Caco-2 (cell line): ENCODE measurements at regions of chr20 and their contacts with region 1.

Region 1: GRCh38 chr20:50680412-50680908 is 10.9 kb downstream of the RIPOR3 start:
- DNase-seq: peak; percentile 90 to 93
- H3K4me3 ChIP-seq: no peak overlapping the region
- H3K4me3 Mint-ChIP-seq: peak overlapping the region; percentile 25
- H3K27ac Mint-ChIP-seq: peak overlapping the region; percentile 67
- H3K4me1 ChIP-seq: peaks cover 49% of the 10 kb centered on the region
- H3K4me1 Mint-ChIP-seq: peaks cover 45% of the 10 kb centered on the region
- H3K27me3 ChIP-seq: no peaks in the 10 kb centered on the region
- H3K27me3 Mint-ChIP-seq: no peaks in the 10 kb centered on the region
- CTCF ChIP-seq: no peak

Region 2: DNA sequence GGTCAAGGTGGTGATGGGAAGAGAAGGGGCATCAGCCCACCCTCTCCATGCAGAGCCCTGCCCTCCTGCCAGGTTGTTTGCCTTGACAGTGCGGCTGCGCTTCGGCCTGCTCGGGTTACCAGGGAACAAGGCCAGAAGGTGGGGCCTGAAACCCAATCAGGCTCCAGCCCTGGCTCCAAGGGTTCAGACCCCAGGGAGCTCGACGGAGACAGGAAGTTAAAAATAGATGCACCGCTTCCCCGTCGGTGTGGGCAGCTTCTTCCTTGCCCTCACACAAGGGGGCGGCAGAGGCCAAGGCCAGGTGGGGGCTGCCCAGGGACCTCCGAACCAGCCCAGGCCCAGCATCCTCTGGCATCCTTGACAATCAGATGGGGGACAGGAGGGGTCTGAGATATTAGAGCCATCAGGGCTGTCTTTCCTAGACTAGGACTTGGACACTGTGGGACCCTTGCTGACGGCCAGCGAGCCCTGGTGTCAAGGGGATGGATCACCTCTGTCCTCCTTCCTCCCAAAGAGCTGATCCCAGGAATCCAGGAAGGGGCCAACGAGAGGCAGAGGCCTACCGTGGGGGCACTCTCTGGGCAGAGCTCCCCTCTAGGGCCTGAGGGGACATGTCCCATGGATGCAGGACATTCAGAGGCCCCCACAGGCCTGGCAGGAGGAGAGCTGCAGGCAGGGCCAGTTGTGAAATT is 54.3 kb before region 1 on chr20:
- CTCF ChIA-PET with region 1: interaction called, 10 read pairs
- POLR2A ChIA-PET with region 1: no interaction called
- intact Hi-C with region 1: no loop called
- DNase-seq: peak; percentile 85 to 91
- H3K4me3 ChIP-seq: no peak overlapping the region
- H3K4me3 Mint-ChIP-seq: no peak overlapping the region
- H3K27ac Mint-ChIP-seq: peak overlapping the region; percentile 23
- H3K4me1 ChIP-seq: peaks cover 41% of the 10 kb centered on the region
- H3K4me1 Mint-ChIP-seq: peaks cover 12% of the 10 kb centered on the region
- H3K27me3 ChIP-seq: no peaks in the 10 kb centered on the region
- H3K27me3 Mint-ChIP-seq: no peaks in the 10 kb centered on the region
- CTCF ChIP-seq: peak; percentile 96 to 97

Region 3: DNA sequence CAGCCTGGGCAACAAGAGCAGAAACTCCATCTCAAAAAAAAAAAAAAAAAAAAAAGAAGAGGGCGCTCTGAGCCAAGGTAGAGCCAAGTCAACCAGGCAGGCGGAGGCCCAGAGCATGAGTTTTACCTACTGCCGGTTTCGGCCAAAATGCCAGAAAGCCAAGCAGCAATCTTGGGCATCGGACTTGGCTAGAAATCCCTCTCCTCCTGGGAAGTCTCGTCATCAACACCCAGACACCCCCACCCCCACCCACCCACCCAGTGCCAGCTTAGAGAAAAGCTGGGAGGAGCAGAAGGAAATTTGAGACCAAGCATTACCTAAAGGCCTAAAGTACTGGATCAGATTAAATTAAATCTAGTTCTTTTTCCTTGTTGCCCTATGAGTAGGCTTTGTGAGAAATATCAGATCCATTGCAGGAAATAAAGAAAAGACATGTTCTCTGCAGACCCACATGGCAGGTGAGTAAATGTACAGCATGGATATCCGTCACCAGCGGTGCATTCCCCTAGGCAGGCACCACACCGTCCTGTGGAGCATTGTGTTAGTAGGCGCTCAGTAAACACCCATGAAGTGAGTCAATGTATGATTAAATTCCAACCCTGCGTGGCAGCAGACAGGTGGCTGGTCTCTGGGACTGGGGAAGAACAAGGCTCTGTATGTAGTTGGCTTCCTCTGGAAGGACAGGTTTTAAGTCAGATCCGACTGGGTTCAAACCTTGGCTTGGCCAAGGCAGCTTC is 10.2 kb before region 1 on chr20:
- CTCF ChIA-PET with region 1: interaction called, 4 read pairs
- POLR2A ChIA-PET with region 1: interaction called, 3 read pairs
- intact Hi-C with region 1: loop called (anchors 1 kb)
- DNase-seq: peak; percentile 86 to 89
- H3K4me3 ChIP-seq: no peak overlapping the region
- H3K4me3 Mint-ChIP-seq: no peak overlapping the region
- H3K27ac Mint-ChIP-seq: peak overlapping the region; percentile 71
- H3K4me1 ChIP-seq: peaks cover 82% of the 10 kb centered on the region
- H3K4me1 Mint-ChIP-seq: peaks cover 76% of the 10 kb centered on the region
- H3K27me3 ChIP-seq: no peaks in the 10 kb centered on the region
- H3K27me3 Mint-ChIP-seq: no peaks in the 10 kb centered on the region
- CTCF ChIP-seq: no peak

Region 4: GRCh38 chr20:50690634-50691572 is 10.4 kb after region 1 on chr20 and contains the start of gene RIPOR3:
- CTCF ChIA-PET with region 1: no interaction called
- POLR2A ChIA-PET with region 1: interaction called, 11 read pairs
- intact Hi-C with region 1: no loop called
- DNase-seq: no peak
- H3K4me3 ChIP-seq: no peak within 1 kb of the TSS
- H3K4me3 Mint-ChIP-seq: no peak within 1 kb of the TSS
- H3K27ac Mint-ChIP-seq: no peak within 1 kb of the TSS
- H3K4me1 ChIP-seq: peaks cover 28% of the 10 kb centered on the region
- H3K4me1 Mint-ChIP-seq: peaks cover 20% of the 10 kb centered on the region
- H3K27me3 ChIP-seq: no peaks in the 10 kb centered on the region
- H3K27me3 Mint-ChIP-seq: no peaks in the 10 kb centered on the region
- CTCF ChIP-seq: no peak
- total RNA-seq, gene RIPOR3: 0.18 and 0.67 TPM in 2 replicates